ENCODE measurements at regions of chr4 and their contacts with region 1.

Region 1: DNA sequence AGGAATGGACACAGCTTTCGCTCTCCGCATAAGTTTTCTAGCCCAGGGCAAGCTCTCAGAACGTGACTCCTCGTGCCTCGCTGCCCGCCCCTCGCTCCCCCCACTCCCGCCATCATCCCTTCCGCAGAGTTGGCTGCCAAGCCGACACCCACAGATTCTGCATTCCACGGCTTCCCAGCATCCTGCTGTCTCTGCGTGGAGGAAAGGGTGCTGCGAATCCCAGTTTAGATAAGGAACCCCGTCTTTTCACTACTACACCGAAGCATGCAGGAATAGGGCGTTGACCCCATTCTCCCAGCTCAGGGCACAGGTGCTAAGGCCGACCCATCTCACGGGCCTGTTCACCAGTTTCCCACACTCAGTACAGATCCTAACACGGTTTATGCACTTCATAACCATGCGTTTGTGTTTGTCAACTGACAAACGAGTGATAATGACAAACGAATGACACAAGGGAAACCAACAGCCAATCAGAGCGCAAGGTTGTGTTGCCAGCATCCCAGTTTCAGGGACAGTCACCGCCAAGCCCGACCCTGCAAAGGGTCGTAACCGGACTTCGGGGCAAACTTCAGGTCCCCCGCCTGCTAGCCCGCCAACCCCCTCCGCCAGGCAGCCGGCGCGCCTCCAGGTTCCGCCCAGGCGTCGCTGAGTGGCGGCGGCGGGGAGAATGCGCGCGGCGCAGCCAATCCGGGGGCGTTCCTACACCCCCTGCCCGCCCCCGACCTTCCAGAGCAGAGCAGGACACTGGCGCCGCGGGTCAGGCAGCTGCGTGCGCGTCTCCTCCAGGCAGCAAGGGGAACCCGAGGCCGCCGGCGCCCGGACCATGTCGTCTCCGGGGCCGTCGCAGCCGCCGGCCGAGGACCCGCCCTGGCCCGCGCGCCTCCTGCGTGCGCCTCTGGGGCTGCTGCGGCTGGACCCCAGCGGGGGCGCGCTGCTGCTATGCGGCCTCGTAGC is at the start of gene CYP2U1:
- DNase-seq: peak; percentile 70 to 95 (median 92)

Region 2: GRCh38 chr4:107989537-107990386 is 58.7 kb after region 1 on chr4 and contains the start of gene HADH:
- intact Hi-C with region 1: loop called (anchors 2 kb)
- DNase-seq: peak; percentile 89 to 98 (median 96)

Measured in head of caudate nucleus (tissue), 42 donors.